GM10248 (cell line): ENCODE measurements at regions of chr6 and their contacts with region 1.

Region 1: DNA sequence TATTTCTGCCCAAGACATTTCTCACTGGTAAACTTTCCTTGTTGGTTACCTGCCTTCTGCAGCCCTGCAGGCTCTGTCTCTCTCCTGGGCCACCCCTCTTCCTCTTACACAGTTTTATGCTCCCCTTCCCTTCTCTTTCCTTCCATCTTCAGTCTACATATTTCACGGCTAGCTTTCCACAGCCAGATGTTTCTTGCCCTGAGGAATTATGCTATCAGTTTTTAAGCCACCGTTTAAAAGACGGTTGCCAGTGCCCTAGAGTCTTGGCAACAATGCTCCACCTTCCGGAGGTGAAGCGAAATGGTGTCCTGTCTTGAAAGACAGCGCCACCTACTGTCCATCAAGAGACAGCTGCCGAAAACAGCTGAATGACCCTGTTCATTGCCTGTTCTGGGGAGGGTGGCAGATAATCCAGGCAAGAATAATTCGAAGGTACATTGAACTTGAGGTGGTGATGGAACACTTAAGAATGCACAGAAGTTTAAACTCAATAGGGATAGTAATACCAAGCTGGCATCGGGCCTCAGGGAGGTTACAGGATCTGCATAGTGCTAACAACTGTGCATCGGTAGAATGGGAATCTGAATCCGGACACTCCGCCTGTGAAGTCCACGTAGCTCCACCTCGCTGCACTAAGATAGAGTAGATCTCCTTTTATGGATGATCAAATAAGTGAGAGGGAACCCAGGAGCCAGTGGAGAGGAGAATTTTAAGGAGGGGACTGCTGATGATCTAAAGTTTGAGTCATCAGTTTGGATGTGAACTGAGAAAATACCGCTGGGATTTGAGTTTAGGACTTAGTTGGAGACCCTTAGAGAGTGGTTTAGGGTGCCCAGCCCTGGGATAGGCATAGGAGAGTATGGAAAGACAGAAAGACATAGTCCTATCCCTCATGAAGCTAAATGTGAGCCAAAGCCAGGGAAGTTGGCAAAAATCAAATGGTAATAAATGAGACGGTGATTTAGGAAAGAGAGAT is 4.8 kb upstream of the TRIM40 start:
- DNase-seq: peak; percentile 85
- CTCF ChIP-seq: peak; percentile 99

Region 2: DNA sequence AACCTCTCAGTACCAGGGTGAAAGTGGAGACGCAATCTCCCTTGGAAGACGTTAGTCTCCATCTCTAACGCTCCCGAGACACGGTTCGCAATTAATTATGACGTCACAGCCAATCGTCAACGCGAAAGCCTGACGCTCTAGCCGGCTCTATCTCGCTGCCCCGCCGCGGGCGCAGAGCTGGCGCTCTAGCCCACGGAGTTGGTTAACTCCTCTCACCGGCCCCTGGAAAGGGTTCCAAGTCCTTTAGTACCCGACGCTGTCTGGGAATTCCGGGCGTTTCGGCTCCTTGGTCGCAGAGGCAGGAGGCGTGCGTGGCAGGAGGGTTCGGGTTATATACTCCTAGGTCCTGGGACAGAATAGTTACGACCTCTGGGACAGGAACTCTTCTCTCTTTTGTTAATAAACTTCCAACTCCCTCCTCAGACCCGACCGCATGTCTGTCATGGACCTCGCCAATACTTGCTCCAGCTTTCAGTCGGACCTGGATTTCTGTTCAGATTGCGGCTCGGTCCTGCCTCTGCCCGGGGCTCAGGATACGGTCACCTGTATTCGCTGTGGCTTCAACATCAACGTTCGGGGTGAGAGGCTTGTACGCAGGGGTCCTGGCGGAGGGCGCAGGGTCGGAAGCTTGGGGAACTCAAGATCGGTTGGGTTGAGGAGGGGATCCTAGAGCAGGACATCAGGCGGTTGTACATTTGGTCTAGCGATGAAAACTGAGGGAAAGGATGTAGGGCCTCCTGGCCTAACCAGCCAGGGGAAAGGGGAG is 69.9 kb before region 1 on chr6 and contains the start of gene POLR1H:
- CTCF ChIA-PET with region 1: interaction called, 11 read pairs
- POLR2A ChIA-PET with region 1: no interaction called
- DNase-seq: peak; percentile 92
- CTCF ChIP-seq: no peak

Region 3: GRCh38 chr6:30097893-30098768 is 33.0 kb before region 1 on chr6:
- CTCF ChIA-PET with region 1: interaction called, 313 read pairs
- POLR2A ChIA-PET with region 1: interaction called, 3 read pairs
- DNase-seq: peak; percentile 22
- CTCF ChIP-seq: no peak

Region 4: GRCh38 chr6:30113003-30113759 is 18.0 kb before region 1 on chr6 and contains the start of gene TRIM31:
- CTCF ChIA-PET with region 1: interaction called, 313 read pairs
- POLR2A ChIA-PET with region 1: no interaction called
- DNase-seq: peak; percentile 20
- CTCF ChIP-seq: no peak

Region 5: DNA sequence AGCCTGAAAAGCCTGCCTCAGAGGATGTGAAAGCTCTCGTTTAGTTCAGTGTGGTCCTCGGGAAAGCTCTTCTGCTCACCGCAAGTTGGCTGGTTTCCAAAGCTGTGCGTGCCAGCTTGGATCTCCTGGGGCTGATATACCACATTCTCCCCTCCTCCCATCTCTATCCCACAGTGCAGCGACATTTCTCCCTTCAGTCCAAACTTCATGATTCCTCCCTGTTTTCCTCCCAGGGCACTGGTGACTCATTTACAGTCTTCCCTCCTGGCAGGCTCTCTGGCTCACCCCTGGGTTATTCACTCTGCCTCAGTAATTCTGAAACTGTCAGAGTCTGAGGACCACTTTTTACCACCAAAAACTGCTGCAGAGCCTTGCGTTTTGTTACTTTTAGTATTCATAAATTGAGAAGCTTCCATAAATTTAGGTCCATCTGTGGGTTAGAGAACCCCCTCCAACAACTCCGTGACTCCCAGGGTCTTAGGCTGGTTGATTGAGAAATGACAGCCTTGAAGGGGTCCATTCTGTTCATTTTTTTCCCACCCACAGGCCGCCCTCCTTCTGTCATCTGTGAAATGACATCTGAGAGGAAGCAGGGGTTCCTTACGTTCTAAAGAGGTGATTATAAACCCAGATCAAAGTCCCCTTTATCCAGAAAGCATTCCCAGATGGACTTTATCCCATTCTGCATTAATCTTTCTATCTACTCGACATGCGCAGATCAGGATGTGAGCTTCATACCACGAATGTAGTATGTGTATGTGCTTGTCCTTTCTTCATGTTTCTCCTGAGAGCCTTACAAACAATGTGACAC is 23.7 kb after region 1 on chr6:
- CTCF ChIA-PET with region 1: interaction called, 17 read pairs
- POLR2A ChIA-PET with region 1: no interaction called
- DNase-seq: no peak
- CTCF ChIP-seq: no peak

Region 6: DNA sequence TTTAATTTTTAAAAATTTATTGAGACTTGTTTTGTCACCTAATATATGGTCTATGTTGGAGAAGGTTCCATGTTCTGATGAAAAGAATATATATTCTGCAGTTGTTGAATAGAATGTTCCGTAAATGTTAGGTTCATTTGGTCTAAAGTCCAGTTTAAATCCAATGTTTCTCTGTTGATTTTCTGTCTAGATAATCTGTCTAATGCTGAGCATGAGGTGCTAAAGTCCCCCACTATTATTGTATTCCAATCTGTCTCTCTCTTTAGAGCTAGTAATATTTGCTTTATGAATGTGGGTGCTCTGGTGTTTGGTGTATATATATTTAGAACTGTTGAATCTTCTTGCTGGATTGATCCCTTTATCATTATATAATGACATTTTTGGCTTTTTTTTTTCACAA is 47.7 kb after region 1 on chr6:
- CTCF ChIA-PET with region 1: interaction called, 10 read pairs
- POLR2A ChIA-PET with region 1: no interaction called
- DNase-seq: no peak
- CTCF ChIP-seq: no peak